ENCODE measurements at regions of chr12 and their contacts with region 1.

Region 1: GRCh38 chr12:132489602-132490239 is at the start of gene FBRSL1:
- DNase-seq: peak; percentile 95
- ATAC-seq: peak; percentile 72
- H3K4me3 Mint-ChIP-seq: peak within 1 kb of the TSS; percentile 81
- H3K27ac Mint-ChIP-seq: peak within 1 kb of the TSS; percentile 96
- H3K4me1 Mint-ChIP-seq: peaks cover 60% of the 10 kb centered on the region
- H3K27me3 Mint-ChIP-seq: no peaks in the 10 kb centered on the region
- total RNA-seq, gene FBRSL1: 51.2 to 58.5 TPM

Region 2: GRCh38 chr12:132445884-132446632 is 43.7 kb before region 1 on chr12:
- CTCF ChIA-PET with region 1: no interaction called
- POLR2A ChIA-PET with region 1: interaction called, 10 read pairs
- DNase-seq: peak; percentile 75
- ATAC-seq: peak; percentile 32
- H3K4me3 Mint-ChIP-seq: peak overlapping the region; percentile 90
- H3K27ac Mint-ChIP-seq: peak overlapping the region; percentile 100
- H3K4me1 Mint-ChIP-seq: peaks cover 63% of the 10 kb centered on the region
- H3K27me3 Mint-ChIP-seq: no peaks in the 10 kb centered on the region

Region 3: GRCh38 chr12:132475304-132476037 is 14.2 kb before region 1 on chr12:
- CTCF ChIA-PET with region 1: interaction called, 4 read pairs
- POLR2A ChIA-PET with region 1: interaction called, 12 read pairs
- DNase-seq: peak; percentile 55
- ATAC-seq: peak; percentile 48
- H3K4me3 Mint-ChIP-seq: peak overlapping the region; percentile 55
- H3K27ac Mint-ChIP-seq: peak overlapping the region; percentile 88
- H3K4me1 Mint-ChIP-seq: peaks cover 38% of the 10 kb centered on the region
- H3K27me3 Mint-ChIP-seq: no peaks in the 10 kb centered on the region

Region 4: DNA sequence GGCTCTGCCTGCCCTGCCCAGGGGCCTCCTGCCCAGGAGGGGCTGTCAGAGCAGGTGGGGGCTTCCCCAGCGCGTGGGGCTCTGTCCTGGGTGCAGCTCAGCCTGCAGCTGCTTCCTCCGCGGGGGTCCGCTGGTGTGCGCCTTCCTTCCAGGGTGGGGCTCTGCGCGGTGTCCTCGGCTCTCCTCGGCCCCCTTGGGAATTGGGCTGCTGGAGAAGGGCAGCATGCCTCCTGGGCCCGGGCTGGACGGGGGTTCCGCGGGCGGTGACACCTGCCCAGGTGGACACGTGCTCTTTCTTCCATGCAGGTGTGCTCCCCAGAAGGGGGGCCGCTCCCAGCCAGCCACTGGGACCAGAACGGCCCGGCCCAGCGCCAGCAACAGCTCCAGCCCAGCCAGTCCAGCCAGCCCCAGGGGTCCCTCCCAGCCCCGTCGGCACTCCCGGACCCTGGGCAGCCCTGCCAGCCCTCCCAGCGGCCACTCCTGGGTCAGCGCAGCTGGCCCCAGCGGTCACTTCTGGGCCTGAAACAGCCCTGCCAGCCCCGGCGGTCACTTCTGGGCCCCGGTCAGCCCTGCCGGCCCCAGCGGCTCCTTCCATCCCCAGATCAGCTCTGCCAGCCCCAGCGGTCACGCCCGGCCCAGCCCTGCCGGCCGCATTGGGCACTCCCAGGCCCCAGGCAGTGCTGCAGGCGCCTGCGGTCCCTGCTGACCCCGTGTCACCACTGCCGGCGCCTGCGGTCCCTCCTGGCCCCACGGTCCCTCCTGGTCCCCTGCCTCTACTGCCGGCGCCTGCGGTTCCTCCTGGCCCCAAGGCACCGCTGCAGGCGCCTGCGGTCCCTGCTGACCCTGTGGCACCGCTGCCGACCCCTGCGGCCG is 19.4 kb after region 1 on chr12:
- CTCF ChIA-PET with region 1: no interaction called
- POLR2A ChIA-PET with region 1: no interaction called
- DNase-seq: no peak
- ATAC-seq: no peak
- H3K4me3 Mint-ChIP-seq: no peak overlapping the region
- H3K27ac Mint-ChIP-seq: no peak overlapping the region
- H3K4me1 Mint-ChIP-seq: peaks cover 30% of the 10 kb centered on the region
- H3K27me3 Mint-ChIP-seq: no peaks in the 10 kb centered on the region

Region 5: GRCh38 chr12:132908145-132909044 is 418.7 kb after region 1 on chr12:
- CTCF ChIA-PET with region 1: no interaction called
- POLR2A ChIA-PET with region 1: no interaction called
- DNase-seq: peak; percentile 98
- ATAC-seq: peak; percentile 97
- H3K4me3 Mint-ChIP-seq: peak overlapping the region; percentile 86
- H3K27ac Mint-ChIP-seq: peak overlapping the region; percentile 95
- H3K4me1 Mint-ChIP-seq: peaks cover 23% of the 10 kb centered on the region
- H3K27me3 Mint-ChIP-seq: peaks cover 14% of the 10 kb centered on the region